PC-9 (cell line): ENCODE measurements at regions of chr6 and their contacts with region 1.

Region 1: DNA sequence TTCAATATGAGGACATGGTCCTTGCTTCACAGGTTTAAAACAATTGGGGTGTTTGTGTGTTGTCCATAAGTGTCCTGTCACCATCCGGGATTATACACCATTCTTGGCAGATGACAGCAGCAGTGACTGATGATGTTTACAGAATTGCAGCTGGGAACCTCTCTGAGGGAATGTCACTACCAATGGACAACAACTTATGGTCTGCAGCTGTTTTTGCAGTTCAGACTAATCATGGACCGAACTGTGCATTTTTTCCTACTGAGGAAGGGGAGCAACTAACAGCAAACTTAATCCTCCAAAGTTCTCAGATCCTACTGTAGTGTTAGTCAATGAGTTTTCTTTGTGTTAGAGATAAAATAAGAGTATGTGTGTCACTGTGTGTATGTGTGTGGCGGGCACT is 26.0 kb downstream of the FAM229B start:
- DNase-seq: no peak
- H3K4me3 ChIP-seq: no peak overlapping the region
- H3K27ac ChIP-seq: no peak overlapping the region
- H3K4me1 ChIP-seq: peaks cover 9% of the 10 kb centered on the region
- H3K27me3 ChIP-seq: no peaks in the 10 kb centered on the region
- CTCF ChIP-seq: no peak

Region 2: DNA sequence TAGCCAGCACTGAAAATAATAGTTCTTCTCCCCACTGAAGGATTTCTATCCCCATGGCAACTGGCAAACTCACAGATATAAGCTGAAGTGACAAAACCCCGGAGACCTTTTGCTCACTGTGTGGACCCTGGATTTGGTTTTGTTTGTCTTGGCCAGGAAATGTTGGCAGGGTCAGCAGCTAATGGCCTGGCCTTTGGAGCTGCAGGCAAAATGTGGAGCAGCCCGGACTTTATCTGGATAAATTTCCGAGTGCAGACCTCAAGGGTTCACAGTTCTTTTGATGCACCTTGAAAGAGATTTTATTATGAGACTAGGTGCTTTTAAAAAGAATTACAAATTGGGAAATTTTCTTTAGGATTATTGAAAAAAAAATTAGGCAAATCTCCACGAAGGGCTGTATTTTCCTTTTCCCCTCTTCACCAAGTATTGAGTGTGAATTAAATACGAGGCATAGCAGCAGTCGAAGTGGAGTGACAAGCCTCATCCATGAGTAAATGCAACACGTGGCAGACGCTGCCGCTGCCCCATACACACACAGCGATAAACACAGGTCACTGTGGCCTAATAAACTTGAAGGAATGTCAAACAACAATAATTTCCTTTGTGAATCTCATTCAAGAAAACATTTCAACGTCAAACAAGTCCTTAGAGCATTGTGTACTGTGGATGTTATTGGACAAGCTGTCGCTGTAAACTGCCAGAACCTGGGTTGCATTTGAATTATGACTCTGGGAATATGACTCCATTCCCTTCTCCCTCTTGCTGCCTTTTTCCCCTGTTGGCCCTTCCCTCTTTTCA is 94.6 kb before region 1 on chr6:
- CTCF ChIA-PET with region 1: no interaction called
- POLR2A ChIA-PET with region 1: no interaction called
- intact Hi-C with region 1: no loop called
- DNase-seq: no peak
- H3K4me3 ChIP-seq: no peak overlapping the region
- H3K27ac ChIP-seq: no peak overlapping the region
- H3K4me1 ChIP-seq: 0 out of 2 replicates have a peak, but pooled peaks cover 4% of the 10 kb centered on the region
- H3K27me3 ChIP-seq: no peaks in the 10 kb centered on the region
- CTCF ChIP-seq: no peak

Region 3: DNA sequence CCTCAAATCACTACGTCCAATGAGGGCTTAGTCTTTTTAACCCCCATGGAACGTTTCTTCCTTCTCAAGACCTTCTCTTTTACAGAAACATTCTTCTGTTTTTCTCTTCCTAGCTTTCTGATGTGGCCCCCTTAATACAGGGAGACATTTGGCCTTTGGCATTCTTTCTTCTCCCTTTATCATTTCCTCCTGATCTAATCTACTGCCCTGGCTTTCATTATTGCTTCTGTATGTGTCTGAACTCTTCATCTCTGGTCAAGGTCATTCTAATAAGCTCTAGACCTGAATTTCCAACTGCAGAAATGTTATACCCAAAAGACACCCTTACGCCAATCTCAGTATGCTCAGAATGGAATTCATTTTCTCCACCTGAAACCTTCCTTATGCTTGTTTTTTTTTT is 159.4 kb after region 1 on chr6:
- CTCF ChIA-PET with region 1: no interaction called
- POLR2A ChIA-PET with region 1: interaction called, 17 read pairs
- intact Hi-C with region 1: no loop called
- DNase-seq: no peak
- H3K4me3 ChIP-seq: no peak overlapping the region
- H3K27ac ChIP-seq: no peak overlapping the region
- H3K4me1 ChIP-seq: peaks cover 7% of the 10 kb centered on the region
- H3K27me3 ChIP-seq: no peaks in the 10 kb centered on the region
- CTCF ChIP-seq: no peak

Region 4: GRCh38 chr6:112330071-112330878 is 216.8 kb after region 1 on chr6:
- CTCF ChIA-PET with region 1: no interaction called
- POLR2A ChIA-PET with region 1: no interaction called
- intact Hi-C with region 1: no loop called
- DNase-seq: peak; percentile 17 to 74
- H3K4me3 ChIP-seq: no peak overlapping the region
- H3K27ac ChIP-seq: peak overlapping the region; percentile 44
- H3K4me1 ChIP-seq: peaks cover 18% of the 10 kb centered on the region; the same call in 1 of the 2 replicates
- H3K27me3 ChIP-seq: no peaks in the 10 kb centered on the region
- CTCF ChIP-seq: peak; percentile 36; the same call in 1 of the 2 replicates